ENCODE measurements at regions of chr6 and their contacts with region 1.

Region 1: DNA sequence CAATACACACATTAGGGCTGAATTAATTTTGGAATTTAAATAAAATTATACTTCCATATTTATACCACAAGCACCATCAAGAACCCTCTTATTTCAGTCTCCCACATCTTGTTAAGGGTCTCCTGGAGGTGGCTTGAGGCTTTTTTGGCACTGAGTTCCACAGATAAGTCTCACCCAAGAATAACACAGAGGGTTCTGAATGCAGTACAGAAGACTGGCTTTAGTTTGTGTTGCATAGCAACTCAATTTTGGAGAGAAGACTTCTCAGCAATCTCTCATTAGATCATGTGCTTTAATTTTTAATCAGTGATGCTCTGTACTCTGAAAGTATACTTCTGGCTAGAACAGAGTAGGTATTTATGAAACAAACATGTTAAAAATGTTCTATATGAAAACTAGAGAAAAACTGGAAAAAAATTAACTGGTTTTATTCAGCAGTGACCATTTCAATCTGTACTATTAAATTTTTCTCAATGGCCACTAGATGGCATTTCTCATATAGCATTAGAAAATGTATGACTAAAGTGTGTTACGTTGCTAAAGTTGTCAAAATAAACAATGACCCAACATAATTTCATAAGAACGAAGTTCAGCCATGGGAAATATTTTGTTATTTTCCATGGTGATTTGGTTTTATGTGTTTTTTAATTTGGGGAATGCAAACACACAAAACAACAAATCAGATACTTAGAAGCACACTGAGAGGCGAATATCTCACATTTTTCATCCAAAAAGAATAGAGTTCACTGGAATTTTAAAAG is 32.7 kb upstream of the MAP7 start:
- DNase-seq: peak; percentile 22
- ATAC-seq: peak; percentile 62; the same call in 1 of the 2 replicates
- H3K4me3 ChIP-seq: no peak overlapping the region
- H3K27ac ChIP-seq: no peak overlapping the region
- H3K4me1 ChIP-seq: no peaks in the 10 kb centered on the region
- H3K27me3 ChIP-seq: no peaks in the 10 kb centered on the region
- CTCF ChIP-seq: peak; percentile 50 to 71 (median 66); a peak in 5 of 6 replicates
- POLR2A ChIP-seq: no peak
- RAD21 ChIP-seq: peak; percentile 69

Region 2: GRCh38 chr6:136927292-136927691 is 344.4 kb after region 1 on chr6:
- CTCF ChIA-PET with region 1: no interaction called
- POLR2A ChIA-PET with region 1: no interaction called
- RAD21 ChIA-PET with region 1: no interaction called
- intact Hi-C with region 1: loop called (anchors 5 kb)
- DNase-seq: peak; percentile 7
- ATAC-seq: peak; percentile 85
- H3K4me3 ChIP-seq: no peak overlapping the region
- H3K27ac ChIP-seq: no peak overlapping the region
- H3K4me1 ChIP-seq: no peaks in the 10 kb centered on the region
- H3K27me3 ChIP-seq: no peaks in the 10 kb centered on the region
- CTCF ChIP-seq: peak; percentile 41 to 51 (median 43); a peak in 5 of 6 replicates
- POLR2A ChIP-seq: no peak
- RAD21 ChIP-seq: peak; percentile 66

Measured in HCT116 (cell line).